SK-N-SH (cell line): ENCODE measurements at regions of chr1 and their contacts with region 1.

Region 1: DNA sequence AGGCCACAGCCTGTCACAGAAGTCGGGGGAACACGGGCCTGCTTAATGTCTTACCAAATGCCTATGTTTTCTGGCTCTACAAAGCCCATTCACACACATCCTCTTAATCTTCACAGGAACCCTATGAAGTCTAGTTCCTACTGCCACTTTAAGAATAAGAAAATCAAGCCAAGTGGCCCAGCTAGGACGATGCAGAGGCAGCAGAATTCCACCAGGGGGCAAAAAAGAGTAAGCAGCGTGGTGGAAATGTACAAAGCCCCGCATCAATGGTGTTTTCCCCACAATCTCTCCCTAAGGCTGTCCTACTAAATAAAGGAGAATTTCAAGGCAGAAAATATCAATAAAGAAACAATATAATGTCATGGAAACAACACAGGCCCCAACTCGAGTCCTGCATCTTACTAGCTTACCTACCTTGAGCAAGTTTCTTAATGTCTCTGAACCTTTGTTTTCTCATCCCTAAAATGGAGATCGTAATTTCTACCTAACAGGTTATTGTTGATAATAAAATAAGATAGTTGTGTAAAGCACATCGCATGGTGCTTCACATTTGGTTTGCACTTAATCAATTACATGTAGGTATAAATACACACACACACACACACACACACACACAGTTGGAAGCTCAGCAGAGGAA is 21.4 kb downstream of the SEC16B start:
- DNase-seq: peak; percentile 69
- H3K4me3 ChIP-seq: peak overlapping the region in 1 of 2 experiments; percentile 38; a peak in 1 of 4 replicates
- H3K27ac ChIP-seq: no peak overlapping the region
- H3K4me1 ChIP-seq: no peaks in the 10 kb centered on the region; a peak in 1 of 4 replicates
- H3K27me3 ChIP-seq: no peaks in the 10 kb centered on the region
- CTCF ChIP-seq: peak; percentile 97
- EP300 ChIP-seq: no peak
- RAD21 ChIP-seq: peak; percentile 70

Region 2: DNA sequence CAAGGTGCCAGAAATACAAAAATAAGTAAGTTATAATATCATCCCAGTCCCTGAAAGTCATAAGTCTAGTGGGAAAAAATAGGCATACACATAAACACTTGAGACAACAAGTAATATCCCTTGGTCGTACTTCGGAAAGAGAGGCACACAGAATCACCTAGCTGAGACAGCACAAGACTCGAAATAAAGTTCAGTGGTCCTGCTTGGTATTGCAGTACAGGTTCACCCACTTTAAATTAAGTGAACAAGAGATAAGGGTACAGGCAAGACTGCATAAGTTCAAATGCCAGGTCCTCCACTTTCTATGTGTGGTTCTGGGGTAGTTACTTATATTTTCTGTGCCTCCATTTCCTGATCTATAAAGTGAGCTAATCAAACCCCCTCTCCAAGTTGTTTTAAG is 26.2 kb before region 1 on chr1:
- CTCF ChIA-PET with region 1: interaction called, 83 read pairs
- POLR2A ChIA-PET with region 1: no interaction called
- DNase-seq: no peak
- H3K4me3 ChIP-seq: no peak overlapping the region
- H3K27ac ChIP-seq: no peak overlapping the region
- H3K4me1 ChIP-seq: no peaks in the 10 kb centered on the region
- H3K27me3 ChIP-seq: no peaks in the 10 kb centered on the region; the same call in 1 of the 2 replicates
- CTCF ChIP-seq: no peak
- EP300 ChIP-seq: no peak
- RAD21 ChIP-seq: no peak

Region 3: DNA sequence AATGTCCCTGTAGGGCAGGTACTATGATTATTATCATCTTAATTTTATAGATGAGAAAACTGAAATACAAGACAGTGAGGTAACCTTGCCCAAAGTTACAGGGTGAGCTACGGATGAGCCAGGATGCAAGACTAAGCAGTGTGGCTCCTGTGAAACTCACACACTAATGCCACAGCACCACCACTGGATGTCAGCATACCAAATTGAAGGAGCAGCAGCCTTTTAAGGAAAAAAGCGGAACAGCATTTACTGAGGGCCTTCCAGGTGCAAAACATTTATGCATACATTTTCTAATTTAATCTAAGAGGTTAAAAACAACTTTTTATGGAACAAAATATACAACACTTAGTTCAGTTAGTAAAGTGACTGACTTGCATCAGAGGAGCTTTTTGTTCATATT is 20.3 kb before region 1 on chr1:
- CTCF ChIA-PET with region 1: interaction called, 83 read pairs
- POLR2A ChIA-PET with region 1: no interaction called
- DNase-seq: no peak
- H3K4me3 ChIP-seq: no peak overlapping the region
- H3K27ac ChIP-seq: no peak overlapping the region
- H3K4me1 ChIP-seq: no peaks in the 10 kb centered on the region
- H3K27me3 ChIP-seq: no peaks in the 10 kb centered on the region
- CTCF ChIP-seq: no peak; the same call in 1 of the 2 replicates
- EP300 ChIP-seq: no peak
- RAD21 ChIP-seq: 0 out of 2 replicates have a peak, but pooled peaks have one; percentile 9

Region 4: DNA sequence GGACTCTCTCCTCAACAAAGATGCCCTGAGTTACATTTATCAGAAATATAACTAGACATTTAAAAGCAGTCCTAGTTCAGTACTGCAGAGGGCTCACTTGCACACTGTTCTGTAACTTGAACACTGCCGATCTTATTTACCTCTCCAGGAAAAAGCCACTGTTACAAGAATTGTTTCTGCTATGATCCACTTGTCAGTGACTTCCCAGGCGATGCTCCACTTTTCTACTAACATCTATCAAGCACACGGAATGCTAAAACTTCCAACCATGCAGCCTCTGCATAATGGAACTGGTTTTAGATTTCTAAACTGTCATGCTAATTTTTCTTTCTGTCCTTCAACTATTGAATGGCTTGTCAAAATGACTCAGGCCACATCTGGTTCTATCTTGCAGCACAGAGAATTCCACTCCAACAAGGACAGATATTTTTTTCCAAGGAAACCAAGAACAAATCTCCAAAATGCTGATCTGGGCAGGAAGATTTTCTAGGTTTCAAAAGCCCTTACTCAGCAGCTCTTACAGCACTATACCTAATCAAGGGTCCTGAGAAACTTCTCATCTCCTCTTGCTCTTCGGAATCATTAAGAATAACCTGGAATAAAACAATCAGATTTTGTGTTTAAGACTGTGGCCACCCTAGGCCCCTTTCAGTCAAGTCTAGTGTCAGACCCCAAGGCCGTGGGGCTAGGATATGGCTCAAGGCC is 11.5 kb after region 1 on chr1:
- CTCF ChIA-PET with region 1: interaction called, 13 read pairs
- POLR2A ChIA-PET with region 1: no interaction called
- DNase-seq: no peak
- H3K4me3 ChIP-seq: no peak overlapping the region
- H3K27ac ChIP-seq: no peak overlapping the region
- H3K4me1 ChIP-seq: no peaks in the 10 kb centered on the region
- H3K27me3 ChIP-seq: no peaks in the 10 kb centered on the region
- CTCF ChIP-seq: peak; percentile 60
- EP300 ChIP-seq: no peak
- RAD21 ChIP-seq: peak; percentile 56